ENCODE measurements at regions of chr21 and their contacts with region 1.

Region 1: GRCh38 chr21:34336756-34337391 is 26.9 kb upstream of the KCNE2 start:
- DNase-seq: peak; percentile 26
- H3K4me3 ChIP-seq: no peak overlapping the region
- H3K27me3 ChIP-seq: no peaks in the 10 kb centered on the region
- CTCF ChIP-seq: no peak

Region 2: DNA sequence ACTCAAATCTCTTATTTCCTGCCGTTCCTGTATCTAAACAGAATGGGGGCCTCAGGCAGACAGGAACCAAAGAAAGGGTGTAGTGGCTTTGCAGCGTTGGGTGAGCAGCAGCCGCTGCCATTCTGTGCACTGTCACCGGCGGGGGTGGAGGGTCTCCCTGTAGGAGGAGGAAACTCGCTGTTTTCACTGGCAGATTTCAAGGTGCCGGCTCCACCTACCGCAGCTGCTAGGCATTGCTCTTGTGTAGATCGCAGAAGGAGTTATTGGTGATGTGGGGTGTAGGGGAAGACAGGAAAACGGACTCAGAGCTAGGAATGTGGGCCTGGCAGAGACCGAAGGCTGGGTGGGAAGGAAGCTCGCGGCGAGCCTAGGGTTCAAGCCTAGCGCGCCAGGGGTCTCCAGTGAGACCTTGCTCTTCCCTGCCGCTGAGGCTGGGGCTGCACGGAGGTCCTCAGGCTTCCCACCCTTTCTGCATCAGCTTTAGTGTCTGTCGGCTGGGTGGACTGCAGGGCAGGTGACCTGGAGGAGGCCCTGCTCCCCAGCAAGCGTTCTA is 442.1 kb before region 1 on chr21:
- CTCF ChIA-PET with region 1: no interaction called
- POLR2A ChIA-PET with region 1: interaction called, 13 read pairs
- DNase-seq: peak; percentile 38
- H3K4me3 ChIP-seq: peak overlapping the region; percentile 16
- H3K27me3 ChIP-seq: no peaks in the 10 kb centered on the region
- CTCF ChIP-seq: peak; percentile 91

Region 3: GRCh38 chr21:34305605-34306604 is 31.0 kb before region 1 on chr21:
- CTCF ChIA-PET with region 1: no interaction called
- POLR2A ChIA-PET with region 1: no interaction called
- DNase-seq: no peak
- H3K4me3 ChIP-seq: no peak overlapping the region
- H3K27me3 ChIP-seq: peaks cover 1% of the 10 kb centered on the region
- CTCF ChIP-seq: no peak

Region 4: DNA sequence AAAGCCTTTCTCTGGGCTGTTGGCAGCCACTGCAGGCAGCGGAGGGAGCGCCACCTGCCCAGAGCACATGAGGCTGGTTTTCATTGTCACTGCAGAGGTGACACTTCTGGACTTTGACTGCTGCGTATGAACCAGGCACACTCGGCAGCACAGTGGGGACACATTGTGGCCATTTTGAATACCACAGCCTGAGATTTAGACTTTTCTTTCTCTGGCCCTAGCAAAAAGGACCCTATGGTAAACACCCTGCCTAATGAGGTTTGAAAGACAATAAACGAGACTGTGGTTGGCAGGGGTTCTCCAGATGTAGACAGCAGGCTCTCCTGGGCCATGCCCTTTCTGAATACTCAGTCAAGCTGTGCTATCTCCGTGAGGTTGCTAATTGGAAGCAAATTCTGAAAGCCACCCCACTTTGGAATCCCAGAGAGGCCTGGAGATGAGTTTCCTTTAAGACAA is 14.9 kb after region 1 on chr21:
- CTCF ChIA-PET with region 1: interaction called, 18 read pairs
- POLR2A ChIA-PET with region 1: no interaction called
- DNase-seq: no peak
- H3K4me3 ChIP-seq: no peak overlapping the region
- H3K27me3 ChIP-seq: peaks cover 12% of the 10 kb centered on the region
- CTCF ChIP-seq: peak; percentile 64

Region 5: GRCh38 chr21:35616090-35616489 is 1279.2 kb after region 1 on chr21:
- CTCF ChIA-PET with region 1: no interaction called
- POLR2A ChIA-PET with region 1: no interaction called
- DNase-seq: peak; percentile 47
- H3K4me3 ChIP-seq: no peak overlapping the region
- H3K27me3 ChIP-seq: no peaks in the 10 kb centered on the region
- CTCF ChIP-seq: peak; percentile 51

Measured in BJ (cell line).